BJ (cell line): ENCODE measurements at regions of chr12 and their contacts with region 1.

Region 1: DNA sequence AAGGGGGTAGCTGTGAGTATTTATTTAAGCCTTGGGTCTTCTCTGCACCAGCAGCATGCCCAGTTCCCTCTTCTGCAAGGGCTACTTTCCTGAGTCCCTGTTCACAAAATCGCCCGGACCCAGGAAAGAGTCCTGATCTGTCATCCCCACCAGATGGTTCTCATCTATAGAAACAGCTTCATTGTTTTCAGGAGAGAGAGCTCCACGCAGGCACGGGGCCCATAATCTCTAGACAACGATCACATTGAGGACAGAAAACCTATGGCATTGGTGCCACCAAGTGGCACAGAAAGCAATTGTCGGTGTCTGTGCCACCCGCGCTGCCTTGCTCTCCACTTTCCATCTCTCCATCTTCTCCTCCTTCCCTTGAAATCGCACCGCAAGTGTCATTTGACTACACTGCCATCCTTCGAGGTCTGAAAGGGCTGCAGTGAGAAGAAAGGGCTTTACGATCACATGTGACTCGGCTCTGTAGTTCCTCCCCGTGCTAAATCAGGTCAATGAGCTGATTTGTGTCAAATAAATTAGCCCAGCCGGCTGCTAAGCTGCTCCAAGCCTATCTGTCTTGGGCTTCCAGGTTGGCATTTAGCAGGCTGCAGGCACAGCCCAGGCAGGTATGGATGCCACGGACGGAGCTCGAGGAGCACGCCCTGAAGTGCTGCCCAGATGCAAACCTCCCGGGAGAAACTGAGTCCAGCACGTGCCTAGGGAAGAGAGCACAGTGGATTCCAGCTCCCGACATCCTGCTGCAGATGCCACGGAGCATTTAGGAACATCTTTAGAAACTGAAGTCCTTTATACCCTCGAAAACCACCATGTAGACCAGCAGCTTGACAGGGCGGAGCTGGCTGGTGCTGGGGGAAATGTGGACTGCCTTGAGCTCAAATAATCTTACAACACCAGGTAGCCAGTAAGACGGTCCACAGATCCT is 28.8 kb downstream of the SPRING1 start:
- DNase-seq: no peak
- H3K4me3 ChIP-seq: 0 out of 2 replicates have a peak overlapping the region, but pooled peaks have one; percentile 3
- H3K27me3 ChIP-seq: peaks cover 11% of the 10 kb centered on the region
- CTCF ChIP-seq: peak; percentile 49

Region 2: DNA sequence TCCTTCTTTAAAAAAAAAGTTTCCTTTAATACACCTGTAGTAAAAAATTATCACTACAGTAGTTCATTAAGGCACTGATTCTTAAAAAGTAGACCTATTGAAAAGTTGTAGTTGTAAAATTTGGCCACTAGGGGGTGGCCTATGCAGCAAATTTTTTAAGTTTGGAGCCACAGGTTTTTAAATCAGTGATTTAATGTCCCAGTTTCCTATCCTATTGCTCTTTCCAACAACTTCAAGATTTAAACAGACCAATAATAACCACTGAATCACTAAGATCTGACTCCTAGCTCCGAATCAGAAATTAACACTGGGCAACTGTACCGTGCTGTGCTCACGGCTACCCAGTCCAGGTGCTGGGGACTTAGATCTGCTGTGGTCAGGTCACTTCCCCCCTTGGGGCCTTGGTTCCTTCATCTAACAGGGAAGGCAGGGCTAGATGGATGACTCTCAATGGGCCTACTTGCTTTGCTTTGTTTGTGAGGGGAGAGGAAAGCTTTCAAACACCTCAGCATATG is 710.9 kb before region 1 on chr12:
- CTCF ChIA-PET with region 1: interaction called, 10 read pairs
- POLR2A ChIA-PET with region 1: no interaction called
- DNase-seq: peak; percentile 8
- H3K4me3 ChIP-seq: no peak overlapping the region
- H3K27me3 ChIP-seq: no peaks in the 10 kb centered on the region
- CTCF ChIP-seq: peak; percentile 65

Region 3: GRCh38 chr12:116693286-116694227 is 15.5 kb before region 1 on chr12:
- CTCF ChIA-PET with region 1: interaction called, 19 read pairs
- POLR2A ChIA-PET with region 1: no interaction called
- DNase-seq: no peak
- H3K4me3 ChIP-seq: no peak overlapping the region
- H3K27me3 ChIP-seq: peaks cover 30% of the 10 kb centered on the region
- CTCF ChIP-seq: peak; percentile 3; the same call in 1 of the 2 replicates

Region 4: GRCh38 chr12:116799955-116800354 is 90.9 kb after region 1 on chr12:
- CTCF ChIA-PET with region 1: no interaction called
- POLR2A ChIA-PET with region 1: no interaction called
- DNase-seq: no peak
- H3K4me3 ChIP-seq: no peak overlapping the region
- H3K27me3 ChIP-seq: no peaks in the 10 kb centered on the region
- CTCF ChIP-seq: no peak

Region 5: DNA sequence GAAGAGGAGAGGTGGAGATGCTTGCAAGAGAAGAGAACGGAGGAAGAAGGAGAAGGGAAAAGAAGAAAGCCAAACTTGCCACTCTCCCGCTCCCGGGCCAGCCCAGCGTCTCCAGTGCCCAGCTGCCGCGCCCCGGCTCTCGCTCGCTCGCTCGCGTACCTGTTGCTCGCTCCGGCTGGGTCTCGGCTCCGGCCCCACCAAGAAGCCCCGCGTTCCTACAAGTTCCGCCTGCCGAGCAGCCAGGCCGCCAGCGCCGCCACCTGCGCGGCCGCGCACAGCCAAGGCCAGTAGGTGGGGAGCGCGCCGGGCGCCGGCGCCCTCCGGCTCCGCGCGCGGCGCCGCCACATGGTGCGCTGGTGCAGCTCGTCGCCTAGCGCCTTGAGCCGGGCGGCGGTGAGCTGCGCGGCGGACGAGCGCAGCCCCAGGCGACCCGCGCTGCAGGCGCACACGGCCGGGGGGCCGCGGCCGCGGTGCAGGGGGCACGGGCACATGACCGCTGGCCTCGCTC is 171.8 kb after region 1 on chr12:
- CTCF ChIA-PET with region 1: interaction called, 55 read pairs
- POLR2A ChIA-PET with region 1: no interaction called
- DNase-seq: no peak
- H3K4me3 ChIP-seq: peak overlapping the region; percentile 4; the same call in 1 of the 2 replicates
- H3K27me3 ChIP-seq: peaks cover 49% of the 10 kb centered on the region
- CTCF ChIP-seq: no peak